GM10248 (cell line): ENCODE measurements at regions of chr1 and their contacts with region 1.

Region 1: DNA sequence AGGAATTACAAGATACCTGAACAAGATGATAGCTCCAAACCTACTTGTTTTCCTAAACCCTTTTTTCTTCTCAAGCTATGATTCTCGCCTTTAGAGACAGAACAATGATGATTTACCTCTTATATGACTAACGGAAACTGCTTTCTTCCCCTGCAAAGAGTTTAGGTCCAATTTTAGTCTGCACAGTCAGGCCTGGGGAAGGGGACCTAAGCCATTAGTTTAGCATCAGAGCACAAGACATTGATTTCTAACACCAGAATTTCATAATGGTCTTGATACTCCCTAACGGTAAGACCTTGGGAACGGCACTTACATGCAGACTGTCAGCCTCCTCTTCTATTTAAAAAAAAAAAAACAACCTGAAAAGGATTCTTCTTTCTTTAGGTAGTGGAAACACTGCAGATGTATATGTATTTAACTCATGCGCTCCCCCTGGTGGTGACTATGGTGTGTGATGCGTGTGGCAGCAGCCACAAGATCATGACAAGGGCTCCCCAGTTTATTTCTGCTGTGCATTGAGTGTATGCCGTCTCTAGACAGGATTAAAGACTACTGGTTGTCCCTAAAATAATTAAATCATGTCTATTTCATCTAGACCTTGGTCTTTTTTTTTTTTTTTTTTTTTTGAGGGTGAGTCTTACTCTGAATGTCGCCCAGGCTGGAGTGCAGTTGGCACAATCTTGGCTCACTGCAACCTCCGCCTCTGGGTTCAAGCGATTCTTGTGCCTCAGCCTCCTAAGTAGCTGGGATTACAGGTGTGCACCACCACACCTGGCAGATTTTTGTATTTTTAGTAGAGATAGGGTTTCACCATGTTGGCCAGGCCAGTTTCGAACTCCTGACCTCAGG is 37.3 kb upstream of the TMEM222 start:
- DNase-seq: peak; percentile 88
- CTCF ChIP-seq: peak; percentile 87

Region 2: GRCh38 chr1:27111626-27112573 is 172.7 kb before region 1 on chr1:
- CTCF ChIA-PET with region 1: interaction called, 209 read pairs
- POLR2A ChIA-PET with region 1: no interaction called
- DNase-seq: peak; percentile 87
- CTCF ChIP-seq: peak; percentile 52

Region 3: DNA sequence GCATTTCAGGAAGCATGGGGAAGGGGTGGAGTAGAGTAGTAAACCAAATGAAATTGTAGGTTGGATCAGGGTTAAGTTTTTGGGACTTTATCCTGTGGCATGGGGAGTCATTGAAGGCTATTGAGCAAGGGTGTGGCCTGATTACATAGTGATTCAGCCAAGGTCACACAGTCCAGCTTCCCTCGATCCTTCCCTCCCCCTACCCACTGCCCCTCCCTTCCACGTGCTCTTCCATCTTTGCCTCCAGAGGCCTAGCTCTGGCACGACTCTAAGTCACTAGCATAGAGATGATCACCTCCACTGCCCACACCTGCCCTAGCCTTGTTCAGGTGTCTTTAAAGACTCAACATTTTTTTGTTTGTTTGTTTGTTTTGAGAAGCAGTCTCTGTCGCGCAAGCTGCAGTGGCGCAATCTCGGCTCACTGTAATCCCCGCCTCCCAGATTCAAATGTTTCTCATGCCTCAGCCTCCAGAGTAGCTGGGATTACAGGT is 92.6 kb before region 1 on chr1:
- CTCF ChIA-PET with region 1: interaction called, 38 read pairs
- POLR2A ChIA-PET with region 1: no interaction called
- DNase-seq: no peak
- CTCF ChIP-seq: no peak

Region 4: GRCh38 chr1:27257155-27257554 is 27.5 kb before region 1 on chr1:
- CTCF ChIA-PET with region 1: interaction called, 17 read pairs
- POLR2A ChIA-PET with region 1: no interaction called
- DNase-seq: no peak
- CTCF ChIP-seq: no peak

Region 5: DNA sequence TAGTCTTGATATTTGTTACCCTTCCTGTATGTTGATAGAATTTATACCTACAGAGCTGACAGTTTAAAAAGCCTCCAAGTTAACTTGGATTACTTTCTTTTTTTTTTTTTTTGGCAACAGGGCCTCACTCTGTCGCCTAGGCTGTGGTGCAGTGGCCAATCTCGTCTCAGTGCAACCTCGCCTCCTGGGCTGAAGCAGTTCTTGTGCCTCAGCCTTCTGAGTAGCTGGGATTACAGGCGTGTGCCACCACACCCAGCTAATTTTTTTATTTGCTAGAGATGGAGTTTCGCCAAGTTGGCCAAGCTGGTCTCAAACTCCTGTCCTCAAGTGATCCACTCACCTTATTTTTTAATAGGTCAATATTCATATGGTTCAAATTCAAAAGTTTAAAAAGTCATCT is 17.5 kb before region 1 on chr1:
- CTCF ChIA-PET with region 1: interaction called, 24 read pairs
- POLR2A ChIA-PET with region 1: no interaction called
- DNase-seq: no peak
- CTCF ChIP-seq: no peak

Region 6: DNA sequence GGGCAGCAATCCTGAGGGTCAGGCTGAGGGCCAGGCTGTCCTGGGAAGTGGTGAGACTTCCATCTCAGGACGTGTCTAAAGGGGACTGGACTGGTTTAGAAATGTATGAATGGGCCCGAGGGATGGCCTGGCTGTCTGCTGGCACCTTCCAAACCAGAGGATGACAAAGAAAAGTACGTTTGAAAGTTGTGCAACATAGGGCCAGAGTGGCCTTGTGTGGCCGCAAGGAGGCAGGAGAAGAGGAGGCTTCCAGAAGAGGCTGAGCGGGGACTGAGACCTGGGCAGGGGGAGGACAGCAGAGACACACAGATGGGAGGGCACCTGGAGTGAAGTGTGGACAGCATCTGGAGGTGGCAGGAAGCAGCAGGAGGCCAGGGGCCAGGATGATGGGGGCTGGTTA is 54.6 kb after region 1 on chr1:
- CTCF ChIA-PET with region 1: no interaction called
- POLR2A ChIA-PET with region 1: no interaction called
- DNase-seq: no peak
- CTCF ChIP-seq: no peak

Region 7: GRCh38 chr1:27862651-27863537 is 578.2 kb after region 1 on chr1:
- CTCF ChIA-PET with region 1: no interaction called
- POLR2A ChIA-PET with region 1: no interaction called
- DNase-seq: peak; percentile 54
- CTCF ChIP-seq: no peak

Region 8: GRCh38 chr1:27915082-27915598 is 630.5 kb after region 1 on chr1:
- CTCF ChIA-PET with region 1: no interaction called
- POLR2A ChIA-PET with region 1: no interaction called
- DNase-seq: no peak
- CTCF ChIP-seq: no peak